ENCODE measurements at regions of chr6 and their contacts with region 1.

Region 1: GRCh38 chr6:157823001-157823527 is at the start of gene SNX9:
- DNase-seq: no peak
- H3K4me3 ChIP-seq: peak within 1 kb of the TSS; percentile 87 to 97 (median 94)
- H3K27ac ChIP-seq: peak within 1 kb of the TSS; percentile 97 to 99 (median 98)
- H3K4me1 ChIP-seq: peaks cover 16 to 31% (median 27%) of the 10 kb centered on the region in 4 donors
- H3K27me3 ChIP-seq: no peaks in the 10 kb centered on the region
- CTCF ChIP-seq: peak in 1 of 3 experiments; percentile 15
- EP300 ChIP-seq: no peak
- POLR2A ChIP-seq: no peak
- total RNA-seq, gene SNX9: 78.1 to 94.7 (median 85.1) TPM

Region 2: GRCh38 chr6:157764178-157765033 is 58.7 kb before region 1 on chr6:
- intact Hi-C with region 1: loop called (anchors 5 kb)
- DNase-seq: no peak
- H3K4me3 ChIP-seq: peak overlapping the region in 3 of 4 donors; percentile 6 to 28 (median 8)
- H3K27ac ChIP-seq: peak overlapping the region; percentile 57 to 72 (median 68)
- H3K4me1 ChIP-seq: peaks cover 31 to 35% (median 33%) of the 10 kb centered on the region in 4 donors
- H3K27me3 ChIP-seq: no peaks in the 10 kb centered on the region
- CTCF ChIP-seq: peak in 1 of 3 experiments; percentile 6
- EP300 ChIP-seq: no peak
- POLR2A ChIP-seq: no peak

Region 3: DNA sequence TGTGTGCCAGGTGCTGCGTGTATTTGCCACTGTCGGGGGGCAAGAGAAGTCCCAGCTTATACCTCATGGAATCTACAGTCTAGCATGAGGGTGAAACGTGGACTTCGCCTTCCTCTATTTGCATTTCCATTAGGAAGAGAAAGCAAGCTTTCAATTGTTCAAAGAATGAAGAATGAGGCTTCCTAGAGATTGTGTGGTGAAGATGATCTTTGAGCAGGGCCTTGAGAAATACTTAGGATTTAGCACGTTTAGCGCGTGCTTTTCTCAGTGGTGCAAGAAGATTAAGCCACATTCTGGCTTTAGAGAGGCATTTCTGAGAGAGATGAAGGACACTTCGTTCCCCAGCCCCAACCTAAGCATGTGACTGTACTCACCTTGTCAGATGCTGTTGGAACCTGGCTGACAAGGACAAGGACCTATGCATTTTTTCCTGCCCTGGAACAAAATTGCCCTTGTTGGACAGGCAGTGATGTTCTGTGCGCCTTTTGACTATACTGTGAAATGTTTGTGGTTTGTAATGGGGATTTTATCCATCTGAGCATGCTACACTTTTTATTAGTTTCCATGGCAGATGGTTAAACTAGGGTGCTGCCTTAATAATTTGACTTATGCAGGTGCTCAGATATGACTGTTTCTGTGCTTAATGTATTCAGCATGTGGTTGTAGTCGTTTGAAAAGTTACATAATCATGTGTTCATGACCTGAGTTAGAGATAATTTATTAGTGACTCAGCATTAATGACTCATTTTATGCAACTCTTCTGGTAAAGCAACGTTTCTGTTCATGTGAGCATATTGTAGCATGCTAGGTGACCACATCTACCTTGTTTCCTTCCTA is 499.9 kb after region 1 on chr6:
- intact Hi-C with region 1: no loop called
- DNase-seq: no peak
- H3K4me3 ChIP-seq: no peak overlapping the region
- H3K27ac ChIP-seq: no peak overlapping the region
- H3K4me1 ChIP-seq: peaks cover 2 to 38% (median 20%) of the 10 kb centered on the region in 4 donors
- H3K27me3 ChIP-seq: no peaks in the 10 kb centered on the region
- CTCF ChIP-seq: no peak
- EP300 ChIP-seq: no peak
- POLR2A ChIP-seq: no peak

Measured in esophagus muscularis mucosa (tissue), 4 donors.